Common myeloid progenitor, CD34-positive (primary cell): ENCODE measurements at regions of chr17 and their contacts with region 1.

Region 1: DNA sequence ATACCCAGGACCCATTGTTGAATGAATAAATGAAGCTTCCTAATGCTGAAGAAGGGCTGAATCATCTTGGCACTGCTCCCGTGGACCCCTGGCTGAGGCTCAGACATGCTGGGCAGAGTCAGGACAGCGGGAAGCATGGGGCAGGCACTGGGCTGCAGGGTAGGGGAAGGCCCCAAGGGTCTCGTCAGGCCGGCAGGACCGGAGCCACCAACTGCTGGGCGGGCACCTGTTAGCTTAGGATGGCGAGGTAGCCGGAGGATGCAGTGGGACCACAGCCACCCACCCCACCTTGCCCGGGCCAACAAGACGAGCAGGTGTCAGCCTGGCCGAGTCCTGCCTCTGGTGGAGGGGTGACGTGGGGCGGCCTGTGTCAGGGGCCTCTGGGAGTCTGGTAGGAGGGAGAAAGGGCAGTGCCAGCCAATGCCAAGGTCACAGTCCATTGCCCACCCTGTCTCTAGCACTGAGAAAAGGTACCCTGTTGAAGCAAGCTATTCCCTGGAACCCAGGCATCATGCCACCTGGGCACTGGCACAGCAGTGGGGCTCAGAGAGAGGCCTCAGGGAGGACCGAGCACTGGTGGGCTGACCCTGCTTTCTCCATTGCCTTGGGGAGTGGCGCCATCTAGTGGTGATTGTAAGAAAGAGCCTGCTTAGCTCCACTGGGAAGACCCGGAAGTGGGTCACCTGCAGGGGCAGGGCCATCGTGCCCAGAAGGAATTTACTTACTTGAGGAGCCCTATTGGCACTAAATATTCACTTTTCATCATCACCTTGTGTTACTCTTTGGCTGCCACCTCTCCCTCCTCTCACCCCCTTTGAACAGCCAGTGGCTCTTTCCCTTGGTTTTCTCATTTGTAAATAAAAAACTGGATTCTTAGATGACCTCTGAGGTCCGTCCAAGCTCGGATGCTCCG is 3.0 kb upstream of the DLX3 start:
- DNase-seq: peak; percentile 89 to 92 (median 90)
- H3K4me3 ChIP-seq: no peak overlapping the region
- H3K27ac ChIP-seq: no peak overlapping the region
- H3K4me1 ChIP-seq: peaks cover 0 to 30% (median 21%) of the 10 kb centered on the region in 4 experiments
- H3K27me3 ChIP-seq: peaks cover 11 to 88% (median 53%) of the 10 kb centered on the region in 5 experiments

Region 2: DNA sequence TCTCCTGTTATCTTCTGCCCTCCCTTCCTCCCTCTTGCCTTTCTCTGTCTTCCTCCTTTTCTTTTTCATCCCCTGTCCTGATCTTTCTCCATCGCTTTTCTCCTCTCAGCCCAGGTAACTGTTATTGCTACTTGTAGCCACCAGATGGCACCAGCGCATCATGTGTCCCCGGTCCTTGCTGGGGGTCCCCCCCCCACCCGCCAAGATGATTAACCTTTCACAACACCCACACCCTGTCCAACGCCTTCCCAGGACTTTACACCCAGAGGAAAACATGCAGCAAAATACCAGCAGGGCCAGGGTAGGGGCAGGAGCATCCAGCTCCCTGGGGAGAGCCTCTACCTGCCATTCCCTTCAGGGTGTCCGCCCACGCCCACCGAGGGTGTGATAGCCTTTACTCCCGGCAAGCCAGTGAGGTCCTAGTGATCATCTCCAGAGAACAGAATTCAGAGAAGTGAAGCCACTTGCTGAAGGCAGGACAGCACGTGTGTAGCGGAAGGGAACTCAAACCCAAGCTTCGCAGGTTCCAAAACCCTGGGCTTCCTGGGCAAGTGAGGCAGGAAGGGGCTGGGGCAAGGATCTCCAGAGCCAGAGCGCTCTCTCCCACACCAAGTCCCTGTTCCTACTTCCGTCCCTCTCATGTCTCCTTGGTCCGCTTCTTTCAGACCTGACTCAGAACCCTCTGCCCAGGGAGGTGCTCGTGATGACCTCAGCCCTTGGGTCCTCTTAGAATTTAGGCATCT is 136.7 kb before region 1 on chr17:
- CTCF ChIA-PET with region 1: interaction called, 172 read pairs
- POLR2A ChIA-PET with region 1: interaction called, 5 read pairs
- DNase-seq: peak; percentile 49 to 72 (median 66)
- H3K4me3 ChIP-seq: no peak overlapping the region
- H3K27ac ChIP-seq: no peak overlapping the region
- H3K4me1 ChIP-seq: peaks cover 0 to 17% (median 14%) of the 10 kb centered on the region in 4 experiments
- H3K27me3 ChIP-seq: peaks cover 0 to 18% (median 4%) of the 10 kb centered on the region in 5 experiments

Region 3: DNA sequence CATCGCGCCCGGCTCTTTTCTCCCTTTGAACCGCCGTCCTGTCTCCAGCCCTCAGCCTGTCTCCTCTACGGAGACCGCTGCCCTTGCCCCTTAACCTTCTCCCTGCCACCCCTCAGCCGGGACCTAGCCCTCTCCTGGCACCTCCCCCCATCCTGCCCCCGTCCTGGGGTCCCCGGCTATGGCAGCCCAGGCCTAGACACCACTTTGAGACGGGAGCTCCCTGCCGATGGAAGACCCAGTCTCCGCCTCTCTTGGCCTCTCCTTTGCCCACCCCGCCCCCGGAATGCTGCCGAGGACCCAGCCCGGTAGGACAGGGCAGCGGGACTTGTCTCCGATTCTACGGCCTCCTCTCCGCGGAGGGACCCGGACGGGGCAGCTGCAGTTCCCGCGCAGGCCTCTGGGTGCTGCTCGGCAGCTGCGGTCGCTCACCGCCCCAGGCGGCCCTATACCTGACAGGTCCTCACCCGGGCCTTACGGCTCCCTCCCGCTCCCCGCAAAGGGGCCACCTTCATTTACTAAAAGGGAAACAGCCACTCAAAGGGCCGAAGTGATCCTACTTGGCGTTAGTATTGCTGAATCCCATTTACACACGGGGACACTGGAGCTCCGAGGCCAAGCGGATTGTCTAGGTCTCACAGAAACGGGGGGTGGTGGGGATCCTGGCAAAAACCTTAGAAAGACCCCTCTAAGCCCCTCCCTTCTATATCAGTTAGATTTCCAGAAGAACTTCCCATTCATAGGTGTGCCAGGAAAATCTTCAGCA is 117.6 kb before region 1 on chr17:
- CTCF ChIA-PET with region 1: interaction called, 96 read pairs
- POLR2A ChIA-PET with region 1: no interaction called
- DNase-seq: peak; percentile 55 to 73 (median 72)
- H3K4me3 ChIP-seq: peak overlapping the region in 3 of 7 experiments; percentile 19 to 55 (median 46)
- H3K27ac ChIP-seq: no peak overlapping the region
- H3K4me1 ChIP-seq: peaks cover 0 to 7% (median 3%) of the 10 kb centered on the region in 4 experiments
- H3K27me3 ChIP-seq: peaks cover 0 to 75% (median 29%) of the 10 kb centered on the region in 5 experiments

Region 4: GRCh38 chr17:49913177-49914083 is 84.6 kb before region 1 on chr17:
- CTCF ChIA-PET with region 1: interaction called, 25 read pairs
- POLR2A ChIA-PET with region 1: no interaction called
- DNase-seq: peak in 2 of 3 donors; percentile 28 to 35
- H3K4me3 ChIP-seq: no peak overlapping the region
- H3K27ac ChIP-seq: no peak overlapping the region
- H3K4me1 ChIP-seq: peaks cover 0 to 11% (median 5%) of the 10 kb centered on the region in 4 experiments
- H3K27me3 ChIP-seq: peaks cover 0 to 87% (median 42%) of the 10 kb centered on the region in 5 experiments

Region 5: DNA sequence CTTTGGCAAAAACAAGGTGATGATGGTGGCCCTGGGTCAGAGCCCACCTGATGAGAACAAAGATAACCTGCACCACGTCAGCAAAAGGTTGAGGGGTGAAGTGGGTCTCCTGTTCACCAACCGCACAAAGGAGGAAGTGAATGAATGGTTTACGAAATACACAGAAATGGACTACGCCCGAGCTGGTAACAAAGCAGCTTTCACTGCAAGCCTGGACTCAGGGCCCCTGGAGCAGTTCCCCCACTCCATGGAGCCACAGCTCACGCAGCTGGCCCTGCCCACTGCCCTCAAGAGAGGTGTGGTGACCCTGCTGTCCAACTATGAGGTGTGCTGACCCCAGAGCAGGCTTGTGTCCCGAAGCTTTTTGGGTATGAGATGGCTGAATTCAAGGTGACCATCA is 58.7 kb before region 1 on chr17:
- CTCF ChIA-PET with region 1: interaction called, 10 read pairs
- POLR2A ChIA-PET with region 1: no interaction called
- DNase-seq: peak in 2 of 3 donors; percentile 53 to 64
- H3K4me3 ChIP-seq: no peak overlapping the region
- H3K27ac ChIP-seq: no peak overlapping the region
- H3K4me1 ChIP-seq: peaks cover 0 to 6% (median 0%) of the 10 kb centered on the region in 4 experiments
- H3K27me3 ChIP-seq: peaks cover 4 to 37% (median 12%) of the 10 kb centered on the region in 5 experiments

Region 6: DNA sequence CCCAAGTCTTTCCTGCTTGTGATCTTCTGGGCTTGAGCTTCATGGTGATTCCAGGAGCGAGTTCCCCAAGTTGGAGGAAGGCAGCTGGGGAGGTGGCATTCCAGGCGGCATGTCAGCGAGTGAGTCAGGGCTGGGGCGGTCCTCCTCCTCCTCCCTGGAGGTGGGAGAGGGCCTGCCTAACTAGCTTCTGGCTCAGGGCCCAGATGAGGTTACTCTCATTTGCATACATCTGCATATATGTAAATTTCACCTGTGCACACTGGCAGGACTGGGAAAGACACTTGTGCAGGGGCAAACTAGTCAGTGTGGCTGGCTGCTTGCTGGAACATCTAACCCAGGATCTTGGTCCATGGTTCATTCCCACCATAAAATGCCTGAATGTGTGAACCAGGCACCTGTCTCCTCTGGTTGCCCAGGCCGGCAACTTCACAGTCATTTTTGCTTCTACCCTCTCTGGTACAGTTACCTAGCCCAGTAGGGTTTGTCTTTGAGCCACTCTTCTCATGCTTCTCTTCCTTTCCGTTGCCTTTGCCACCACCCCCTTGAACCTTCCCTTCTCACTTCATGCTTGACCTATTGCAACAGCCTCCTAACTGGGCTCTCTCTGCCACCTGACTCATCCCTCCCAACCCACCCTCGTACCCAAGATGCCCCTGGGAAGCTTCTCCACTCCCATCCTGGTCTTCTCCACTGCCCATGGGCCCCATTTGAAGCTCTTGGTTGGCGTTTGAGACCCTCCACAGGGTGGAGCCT is 38.7 kb before region 1 on chr17:
- CTCF ChIA-PET with region 1: interaction called, 91 read pairs
- POLR2A ChIA-PET with region 1: no interaction called
- DNase-seq: no peak
- H3K4me3 ChIP-seq: no peak overlapping the region
- H3K27ac ChIP-seq: no peak overlapping the region
- H3K4me1 ChIP-seq: peaks cover 0 to 12% (median 8%) of the 10 kb centered on the region in 4 experiments
- H3K27me3 ChIP-seq: peaks cover 0 to 54% (median 22%) of the 10 kb centered on the region in 5 experiments

Region 7: DNA sequence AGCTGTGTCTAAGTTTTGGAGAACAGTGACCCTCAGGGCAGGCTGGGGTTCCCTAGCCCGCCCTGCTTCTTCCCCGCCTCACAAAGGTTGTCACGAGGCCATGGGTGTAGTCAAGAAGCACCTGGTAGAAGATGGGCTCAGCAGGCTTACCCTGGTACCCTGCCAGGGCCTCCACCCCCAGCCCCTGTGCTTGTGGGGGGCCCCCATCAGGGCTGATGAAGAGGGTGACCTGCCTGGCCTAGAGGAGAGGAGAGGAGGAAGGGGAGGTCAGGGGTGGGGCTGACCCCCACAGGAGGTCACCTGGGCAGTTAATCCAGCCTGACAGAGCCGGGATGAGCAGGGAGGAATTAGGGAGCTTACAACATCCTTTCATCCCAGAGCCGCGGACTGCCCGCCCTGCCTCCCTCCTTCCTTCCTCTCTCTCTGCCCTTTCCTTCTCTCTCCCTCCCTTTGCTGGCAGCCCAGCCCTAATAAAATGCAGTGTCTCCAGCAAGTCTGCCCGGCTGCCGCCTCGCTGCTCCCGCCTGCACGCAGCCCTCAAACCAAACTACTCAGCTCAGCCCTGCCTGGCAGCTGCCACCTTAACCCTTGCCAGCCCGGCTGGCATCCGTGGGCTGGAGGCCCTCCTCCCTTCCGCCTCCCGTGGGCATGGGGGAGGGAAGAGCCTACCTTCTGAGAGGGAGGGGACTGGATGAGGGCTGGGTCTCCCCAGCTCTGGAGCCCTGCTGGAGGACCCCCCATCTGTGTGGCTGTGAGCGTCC is 10.2 kb before region 1 on chr17:
- CTCF ChIA-PET with region 1: interaction called, 33 read pairs
- POLR2A ChIA-PET with region 1: no interaction called
- DNase-seq: peak in 1 of 3 donors; percentile 52
- H3K4me3 ChIP-seq: no peak overlapping the region
- H3K27ac ChIP-seq: no peak overlapping the region
- H3K4me1 ChIP-seq: peaks cover 0 to 21% (median 13%) of the 10 kb centered on the region in 4 experiments
- H3K27me3 ChIP-seq: peaks cover 0 to 79% (median 28%) of the 10 kb centered on the region in 5 experiments